Activated T-helper 1 cell treated with anti-CD3 and anti-CD28 coated beads, Interleukin-12 subunit alpha, Interleukin-12 subunit beta, Interleukin-2, Interleukin-4 antibody, amounts not matched to agents 30 ng/mL and 10 ng/mL and 1 ng/mL, durations not matched to agents 14 hours and 24 hours and 36 hours (primary cell): ENCODE measurements at regions of chr9 and their contacts with region 1.

Region 1: DNA sequence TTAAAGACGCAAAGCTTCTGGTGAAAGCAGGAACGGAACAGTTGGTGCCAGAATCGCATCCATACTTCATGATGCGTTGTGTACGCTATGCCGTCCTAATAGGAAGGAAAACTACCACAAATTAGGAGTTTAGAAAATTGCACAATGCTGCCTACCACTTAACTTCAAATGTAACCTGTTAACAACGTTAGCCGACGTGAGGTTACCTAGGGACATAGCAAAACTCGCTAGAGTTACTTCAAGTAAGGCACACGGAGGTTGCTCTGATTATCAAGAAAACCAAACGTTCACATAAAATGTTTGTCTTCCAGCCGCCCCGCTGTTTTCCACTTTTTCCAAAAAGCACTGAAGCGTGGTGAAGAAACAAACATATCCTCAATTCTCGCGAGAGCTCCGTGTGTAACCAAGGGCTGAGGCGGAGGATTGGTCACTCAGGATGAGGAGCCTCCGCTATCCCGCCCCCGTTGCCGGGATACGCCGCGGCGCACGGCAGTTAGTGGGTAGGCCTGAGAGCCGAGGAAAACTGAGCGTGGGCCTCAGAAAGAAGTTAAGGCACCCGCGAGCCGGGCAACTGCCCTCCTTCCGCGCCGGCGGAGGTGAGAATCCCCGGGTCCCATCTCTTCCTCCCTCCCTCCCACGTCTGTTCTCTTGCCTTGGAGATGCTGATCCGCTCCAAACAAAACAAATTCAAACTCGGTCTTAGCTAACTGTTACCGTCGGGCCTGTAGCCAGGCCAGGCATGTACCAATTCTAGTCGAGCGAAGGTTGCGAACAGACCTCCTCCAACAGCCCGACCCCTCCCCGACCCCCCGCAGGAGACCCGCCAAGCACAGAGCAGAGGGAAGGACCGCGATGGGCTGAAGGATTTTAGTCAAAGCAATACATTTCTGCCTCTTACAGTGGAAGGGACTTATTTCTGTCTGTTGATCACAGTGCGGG is at the start of gene IFT74:
- DNase-seq: peak; percentile 94
- H3K4me3 Mint-ChIP-seq: peak within 1 kb of the TSS; percentile 89
- H3K27ac Mint-ChIP-seq: peak within 1 kb of the TSS; percentile 90
- H3K4me1 Mint-ChIP-seq: peaks cover 40% of the 10 kb centered on the region
- H3K27me3 Mint-ChIP-seq: no peaks in the 10 kb centered on the region
- total RNA-seq, gene IFT74: 7.9 and 9.5 TPM in 2 replicates

Region 2: DNA sequence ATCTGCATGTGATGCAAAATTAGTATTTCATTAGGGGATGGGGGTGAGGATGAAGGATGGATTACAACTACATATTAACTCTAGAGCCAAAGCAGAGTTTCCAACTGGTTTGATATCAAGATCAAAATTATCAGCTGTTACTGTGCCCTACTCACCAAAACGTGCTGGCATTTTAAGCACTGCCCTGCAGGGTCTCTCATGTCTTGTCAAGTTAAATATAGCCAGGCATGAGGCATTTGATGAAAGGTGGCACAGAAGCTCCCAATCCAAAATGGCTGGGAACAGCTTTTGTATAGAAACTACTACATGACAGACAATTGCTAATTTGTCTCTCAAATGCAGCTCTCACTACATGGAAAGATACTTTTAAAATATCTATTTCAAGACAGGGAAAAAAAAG is 36.5 kb before region 1 on chr9:
- intact Hi-C with region 1: no loop called
- DNase-seq: no peak
- H3K4me3 Mint-ChIP-seq: no peak overlapping the region
- H3K27ac Mint-ChIP-seq: no peak overlapping the region
- H3K4me1 Mint-ChIP-seq: no peaks in the 10 kb centered on the region
- H3K27me3 Mint-ChIP-seq: no peaks in the 10 kb centered on the region

Region 3: GRCh38 chr9:26939955-26940711 is 16.1 kb before region 1 on chr9:
- intact Hi-C with region 1: loop called (anchors 2 kb)
- DNase-seq: no peak
- H3K4me3 Mint-ChIP-seq: no peak overlapping the region
- H3K27ac Mint-ChIP-seq: peak overlapping the region; percentile 14
- H3K4me1 Mint-ChIP-seq: peaks cover 68% of the 10 kb centered on the region
- H3K27me3 Mint-ChIP-seq: no peaks in the 10 kb centered on the region